IMR-90 (cell line): ENCODE measurements at regions of chr9 and their contacts with region 1.

Region 1: GRCh38 chr9:98860871-98861293 is 53.4 kb downstream of the GALNT12 start:
- DNase-seq: peak; percentile 95
- ATAC-seq: peak; percentile 94
- H3K4me3 ChIP-seq: no peak overlapping the region
- H3K27ac ChIP-seq: peak overlapping the region; percentile 19; the same call in 1 of the 2 replicates
- H3K4me1 ChIP-seq: peaks cover 9% of the 10 kb centered on the region
- H3K27me3 ChIP-seq: no peaks in the 10 kb centered on the region
- CTCF ChIP-seq: peak; percentile 92
- POLR2A ChIP-seq: peak; percentile 42; the same call in 1 of the 2 replicates
- RAD21 ChIP-seq: peak; percentile 98

Region 2: GRCh38 chr9:98943682-98944056 is 82.8 kb after region 1 on chr9 and contains the start of gene COL15A1:
- CTCF ChIA-PET with region 1: no interaction called
- POLR2A ChIA-PET with region 1: no interaction called
- dilution Hi-C with region 1: no loop called
- in situ Hi-C with region 1: no loop called
- intact Hi-C with region 1: loop called (anchors 1 kb)
- DNase-seq: no peak
- ATAC-seq: peak; percentile 81
- H3K4me3 ChIP-seq: peak within 1 kb of the TSS; percentile 99
- H3K27ac ChIP-seq: peak within 1 kb of the TSS; percentile 73
- H3K4me1 ChIP-seq: peaks cover 3% of the 10 kb centered on the region; the same call in 1 of the 2 replicates
- H3K27me3 ChIP-seq: peaks cover 35% of the 10 kb centered on the region
- CTCF ChIP-seq: 0 out of 2 replicates have a peak, but pooled peaks have one; percentile 10
- POLR2A ChIP-seq: no peak
- RAD21 ChIP-seq: peak; percentile 9; the same call in 1 of the 2 replicates
- total RNA-seq, gene COL15A1: 1.9 and 2.2 TPM in 2 replicates

Region 3: DNA sequence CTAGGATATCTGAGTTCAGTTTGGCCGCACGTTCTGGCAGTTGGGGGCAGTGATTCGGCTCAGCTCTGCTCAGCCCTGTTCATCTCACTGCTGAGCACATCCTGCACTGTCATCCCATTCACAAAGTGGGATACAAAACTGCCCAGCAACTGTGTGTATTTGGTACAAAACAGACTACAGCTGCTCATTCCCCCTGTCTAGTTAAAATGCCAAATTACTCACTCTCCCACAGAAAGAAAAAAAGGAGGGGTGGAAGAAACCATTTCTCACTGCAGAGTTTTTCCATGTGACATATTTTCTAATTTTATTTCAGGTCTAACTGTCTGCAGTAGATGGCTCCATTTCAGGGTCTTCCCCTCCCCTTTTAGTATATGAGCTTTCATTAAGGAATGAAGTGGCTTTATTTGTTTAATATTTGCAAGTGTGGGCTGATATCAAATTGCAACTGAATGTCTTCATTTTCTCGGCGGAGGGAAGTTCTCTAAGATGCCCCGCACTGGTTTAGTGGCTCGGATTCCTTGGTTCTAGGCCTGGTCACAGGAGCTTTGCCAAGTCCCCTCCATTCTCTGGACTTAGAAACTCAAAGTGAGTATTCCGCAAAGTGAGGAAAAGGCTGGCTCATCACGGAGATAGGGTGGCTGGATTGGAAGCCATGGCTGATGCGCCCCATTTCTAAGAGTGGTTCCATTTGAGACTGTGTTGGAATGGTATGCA is 97.5 kb after region 1 on chr9:
- CTCF ChIA-PET with region 1: interaction called, 4 read pairs
- POLR2A ChIA-PET with region 1: no interaction called
- dilution Hi-C with region 1: no loop called
- in situ Hi-C with region 1: no loop called
- intact Hi-C with region 1: loop called (anchors 1 kb)
- DNase-seq: peak; percentile 98
- ATAC-seq: peak; percentile 68
- H3K4me3 ChIP-seq: no peak overlapping the region
- H3K27ac ChIP-seq: peak overlapping the region; percentile 96
- H3K4me1 ChIP-seq: peaks cover 37% of the 10 kb centered on the region
- H3K27me3 ChIP-seq: no peaks in the 10 kb centered on the region
- CTCF ChIP-seq: no peak
- POLR2A ChIP-seq: no peak; the same call in 1 of the 2 replicates
- RAD21 ChIP-seq: no peak

Region 4: GRCh38 chr9:98974994-98975712 is 114.3 kb after region 1 on chr9:
- CTCF ChIA-PET with region 1: interaction called, 4 read pairs
- POLR2A ChIA-PET with region 1: no interaction called
- dilution Hi-C with region 1: no loop called
- in situ Hi-C with region 1: no loop called
- intact Hi-C with region 1: loop called (anchors 1 kb)
- DNase-seq: peak; percentile 66
- ATAC-seq: peak; percentile 86
- H3K4me3 ChIP-seq: no peak overlapping the region
- H3K27ac ChIP-seq: no peak overlapping the region
- H3K4me1 ChIP-seq: peaks cover 26% of the 10 kb centered on the region
- H3K27me3 ChIP-seq: no peaks in the 10 kb centered on the region
- CTCF ChIP-seq: peak; percentile 98
- POLR2A ChIP-seq: 0 out of 2 replicates have a peak, but pooled peaks have one; percentile 45
- RAD21 ChIP-seq: peak; percentile 93

Region 5: GRCh38 chr9:98998441-98999151 is 137.7 kb after region 1 on chr9:
- CTCF ChIA-PET with region 1: interaction called, 18 read pairs
- POLR2A ChIA-PET with region 1: no interaction called
- dilution Hi-C with region 1: no loop called
- in situ Hi-C with region 1: loop called (anchors 5 kb)
- intact Hi-C with region 1: loop called (anchors 1 kb)
- DNase-seq: peak; percentile 56
- ATAC-seq: peak; percentile 86
- H3K4me3 ChIP-seq: no peak overlapping the region
- H3K27ac ChIP-seq: peak overlapping the region; percentile 31; the same call in 1 of the 2 replicates
- H3K4me1 ChIP-seq: peaks cover 17% of the 10 kb centered on the region
- H3K27me3 ChIP-seq: no peaks in the 10 kb centered on the region
- CTCF ChIP-seq: peak; percentile 78
- POLR2A ChIP-seq: no peak
- RAD21 ChIP-seq: peak; percentile 89

Region 6: DNA sequence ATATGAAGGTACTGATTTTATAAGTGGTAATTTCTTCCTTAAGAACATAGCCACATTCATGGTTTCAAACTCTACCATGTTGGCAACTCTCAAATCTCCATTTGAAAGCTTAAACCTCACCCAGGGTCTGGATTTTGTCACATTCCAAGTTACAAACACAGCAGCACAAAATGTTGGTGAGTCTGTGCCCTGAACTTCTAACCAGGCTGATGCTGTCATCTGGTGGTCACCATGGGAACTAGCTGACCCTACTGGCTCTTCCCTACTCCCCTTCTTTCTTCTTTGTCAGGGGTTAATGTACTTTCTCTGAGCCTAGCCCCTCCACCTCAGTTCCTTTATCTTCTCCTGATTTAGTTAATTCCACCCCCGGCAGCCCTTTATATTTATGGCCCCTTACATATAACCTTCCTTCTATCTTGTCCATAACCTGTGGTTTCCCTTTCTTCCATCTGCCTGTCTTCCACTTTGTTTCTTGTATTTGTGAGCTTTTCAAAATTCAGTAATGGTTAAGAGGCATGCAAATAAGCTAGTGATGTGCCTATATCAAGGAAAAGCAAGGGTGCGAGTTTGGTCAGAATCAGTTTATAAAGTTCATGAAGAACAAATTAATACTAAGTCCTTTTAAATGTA is 279.9 kb after region 1 on chr9:
- CTCF ChIA-PET with region 1: interaction called, 10 read pairs
- POLR2A ChIA-PET with region 1: no interaction called
- dilution Hi-C with region 1: no loop called
- in situ Hi-C with region 1: loop called (anchors 5 kb)
- intact Hi-C with region 1: loop called (anchors 1 kb)
- DNase-seq: peak; percentile 67
- ATAC-seq: peak; percentile 90
- H3K4me3 ChIP-seq: no peak overlapping the region
- H3K27ac ChIP-seq: no peak overlapping the region
- H3K4me1 ChIP-seq: no peaks in the 10 kb centered on the region
- H3K27me3 ChIP-seq: no peaks in the 10 kb centered on the region
- CTCF ChIP-seq: peak; percentile 86
- POLR2A ChIP-seq: no peak
- RAD21 ChIP-seq: peak; percentile 95

Region 7: GRCh38 chr9:99150451-99151171 is 289.7 kb after region 1 on chr9:
- CTCF ChIA-PET with region 1: no interaction called
- POLR2A ChIA-PET with region 1: no interaction called
- dilution Hi-C with region 1: no loop called
- in situ Hi-C with region 1: loop called (anchors 5 kb)
- intact Hi-C with region 1: no loop called
- DNase-seq: no peak
- ATAC-seq: no peak
- H3K4me3 ChIP-seq: no peak overlapping the region
- H3K27ac ChIP-seq: no peak overlapping the region
- H3K4me1 ChIP-seq: peaks cover 11% of the 10 kb centered on the region
- H3K27me3 ChIP-seq: no peaks in the 10 kb centered on the region
- CTCF ChIP-seq: no peak
- POLR2A ChIP-seq: no peak
- RAD21 ChIP-seq: no peak